ENCODE measurements at regions of chr1 and their contacts with region 1.

Region 1: GRCh38 chr1:32981003-32981901 is 16.6 kb upstream of the RNF19B start:
- DNase-seq: peak; percentile 91
- H3K4me3 Mint-ChIP-seq: peak overlapping the region; percentile 78
- H3K27ac Mint-ChIP-seq: peak overlapping the region; percentile 89
- H3K4me1 Mint-ChIP-seq: peaks cover 62% of the 10 kb centered on the region
- H3K27me3 Mint-ChIP-seq: no peaks in the 10 kb centered on the region

Region 2: DNA sequence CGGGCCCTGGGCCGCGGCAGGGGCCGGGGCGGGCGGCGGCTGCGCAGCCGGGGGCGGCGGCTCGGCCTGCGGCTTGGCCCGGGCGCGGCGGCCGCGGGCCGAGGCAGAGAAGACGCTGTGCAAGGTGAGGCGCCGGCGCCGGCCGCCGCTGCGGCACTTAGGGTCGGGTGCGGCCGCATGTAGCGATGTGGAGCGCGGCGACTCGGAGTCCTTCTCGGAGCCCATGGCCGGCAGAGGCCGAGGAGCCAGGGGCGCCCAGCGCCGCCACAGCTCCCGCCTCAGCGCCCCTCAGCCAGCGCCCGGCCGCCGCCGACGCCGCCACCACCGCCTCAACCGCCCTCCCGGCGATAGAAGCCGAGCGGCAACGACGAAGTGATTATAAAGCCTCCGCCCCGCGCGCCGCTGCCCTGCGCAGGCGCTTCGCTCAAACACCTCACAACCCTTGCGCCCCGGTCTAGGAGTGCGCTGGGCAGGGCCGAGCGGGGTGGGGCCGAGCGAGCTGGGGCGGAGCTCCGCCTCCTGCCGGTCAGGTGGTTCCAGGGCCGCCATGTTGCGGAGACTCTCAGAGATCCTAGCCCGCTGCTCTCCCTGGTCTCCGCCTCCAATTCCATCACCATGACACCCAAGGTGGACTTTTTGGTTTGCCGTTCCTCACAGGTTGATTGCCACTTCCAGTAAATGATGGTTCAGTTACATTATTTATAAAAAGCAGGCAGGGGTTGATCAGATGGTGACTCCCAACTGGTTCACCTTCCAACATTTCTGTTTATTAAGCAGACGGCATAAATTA is 16.6 kb before region 1 on chr1 and contains the start of gene RNF19B:
- intact Hi-C with region 1: loop called (anchors 1 kb)
- DNase-seq: peak; percentile 99
- H3K4me3 Mint-ChIP-seq: peak within 1 kb of the TSS; percentile 87
- H3K27ac Mint-ChIP-seq: peak within 1 kb of the TSS; percentile 87
- H3K4me1 Mint-ChIP-seq: peaks cover 57% of the 10 kb centered on the region
- H3K27me3 Mint-ChIP-seq: no peaks in the 10 kb centered on the region
- total RNA-seq, gene RNF19B: 44.5 and 46.8 TPM in 2 replicates

Measured in activated CD4-positive, alpha-beta T cell treated with anti-CD3 and anti-CD28 coated beads, Interleukin-2, amount 10 ng/mL, durations not matched to agents 24 days and 14 days (primary cell).